ENCODE measurements at regions of chr17 and their contacts with region 1.

Region 1: GRCh38 chr17:4997302-4998026 is at the starts of genes INCA1 and KIF1C:
- DNase-seq: peak; percentile 93
- H3K4me3 Mint-ChIP-seq: peak within 1 kb of the TSS; percentile 82
- H3K27ac Mint-ChIP-seq: peak within 1 kb of the TSS; percentile 42
- H3K4me1 Mint-ChIP-seq: peaks cover 20% of the 10 kb centered on the region
- H3K27me3 Mint-ChIP-seq: no peaks in the 10 kb centered on the region
- total RNA-seq, gene INCA1: 0.40 TPM in 1 of 2 experiments, not detected in the other
- total RNA-seq, gene KIF1C: 43.9 to 48.8 TPM

Region 2: GRCh38 chr17:4980644-4981216 is 16.7 kb before region 1 on chr17:
- CTCF ChIA-PET with region 1: interaction called, 5 read pairs
- POLR2A ChIA-PET with region 1: no interaction called
- intact Hi-C with region 1: loop called (anchors 2 kb)
- DNase-seq: peak; percentile 40
- H3K4me3 Mint-ChIP-seq: no peak overlapping the region
- H3K27ac Mint-ChIP-seq: peak overlapping the region; percentile 34
- H3K4me1 Mint-ChIP-seq: peaks cover 23% of the 10 kb centered on the region
- H3K27me3 Mint-ChIP-seq: no peaks in the 10 kb centered on the region

Region 3: GRCh38 chr17:4986951-4987766 is 10.3 kb before region 1 on chr17 and contains the start of gene CAMTA2:
- CTCF ChIA-PET with region 1: interaction called, 4 read pairs
- POLR2A ChIA-PET with region 1: interaction called, 31 read pairs
- intact Hi-C with region 1: loop called (anchors 1 kb)
- DNase-seq: peak; percentile 90
- H3K4me3 Mint-ChIP-seq: peak within 1 kb of the TSS; percentile 91
- H3K27ac Mint-ChIP-seq: peak within 1 kb of the TSS; percentile 94
- H3K4me1 Mint-ChIP-seq: peaks cover 42% of the 10 kb centered on the region
- H3K27me3 Mint-ChIP-seq: no peaks in the 10 kb centered on the region
- total RNA-seq, gene CAMTA2: 101 to 109 TPM

Region 4: GRCh38 chr17:5097101-5097834 is 99.8 kb after region 1 on chr17:
- CTCF ChIA-PET with region 1: no interaction called
- POLR2A ChIA-PET with region 1: no interaction called
- intact Hi-C with region 1: no loop called
- DNase-seq: peak; percentile 33
- H3K4me3 Mint-ChIP-seq: peak overlapping the region; percentile 53
- H3K27ac Mint-ChIP-seq: no peak overlapping the region
- H3K4me1 Mint-ChIP-seq: peaks cover 7% of the 10 kb centered on the region
- H3K27me3 Mint-ChIP-seq: peaks cover 16% of the 10 kb centered on the region

Region 5: DNA sequence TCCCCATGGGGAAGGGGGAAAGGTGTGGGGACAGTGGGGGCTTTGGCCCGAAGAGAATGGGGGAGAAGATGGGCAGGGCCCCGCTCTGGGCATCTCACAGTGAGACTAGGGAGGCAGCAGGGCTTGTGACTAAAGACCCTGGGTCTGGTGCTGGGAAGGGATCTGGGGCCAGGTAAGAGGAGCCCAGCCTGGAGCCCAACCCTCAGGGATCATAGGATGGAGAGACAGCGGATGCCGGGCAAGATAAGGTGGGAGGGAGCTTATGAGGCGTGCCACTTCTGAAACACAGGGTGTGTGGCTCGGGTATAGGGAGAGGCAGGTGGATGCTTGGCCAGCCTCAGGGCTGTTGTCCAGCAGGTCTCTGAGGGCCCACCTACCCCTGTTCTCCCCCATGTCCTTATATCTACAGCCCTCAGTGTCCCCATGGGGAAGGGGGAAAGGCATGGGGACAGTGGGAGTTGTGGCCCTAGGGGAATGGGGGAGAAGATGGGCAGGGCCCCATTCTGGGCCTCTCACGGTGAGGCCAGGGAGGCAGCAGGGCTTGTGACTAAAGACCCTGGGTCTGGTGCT is 133.8 kb after region 1 on chr17:
- CTCF ChIA-PET with region 1: no interaction called
- POLR2A ChIA-PET with region 1: no interaction called
- intact Hi-C with region 1: no loop called
- DNase-seq: no peak
- H3K4me3 Mint-ChIP-seq: no peak overlapping the region
- H3K27ac Mint-ChIP-seq: no peak overlapping the region
- H3K4me1 Mint-ChIP-seq: no peaks in the 10 kb centered on the region
- H3K27me3 Mint-ChIP-seq: peaks cover 8% of the 10 kb centered on the region